ENCODE measurements at regions of chr2 and their contacts with region 1.

Region 1: DNA sequence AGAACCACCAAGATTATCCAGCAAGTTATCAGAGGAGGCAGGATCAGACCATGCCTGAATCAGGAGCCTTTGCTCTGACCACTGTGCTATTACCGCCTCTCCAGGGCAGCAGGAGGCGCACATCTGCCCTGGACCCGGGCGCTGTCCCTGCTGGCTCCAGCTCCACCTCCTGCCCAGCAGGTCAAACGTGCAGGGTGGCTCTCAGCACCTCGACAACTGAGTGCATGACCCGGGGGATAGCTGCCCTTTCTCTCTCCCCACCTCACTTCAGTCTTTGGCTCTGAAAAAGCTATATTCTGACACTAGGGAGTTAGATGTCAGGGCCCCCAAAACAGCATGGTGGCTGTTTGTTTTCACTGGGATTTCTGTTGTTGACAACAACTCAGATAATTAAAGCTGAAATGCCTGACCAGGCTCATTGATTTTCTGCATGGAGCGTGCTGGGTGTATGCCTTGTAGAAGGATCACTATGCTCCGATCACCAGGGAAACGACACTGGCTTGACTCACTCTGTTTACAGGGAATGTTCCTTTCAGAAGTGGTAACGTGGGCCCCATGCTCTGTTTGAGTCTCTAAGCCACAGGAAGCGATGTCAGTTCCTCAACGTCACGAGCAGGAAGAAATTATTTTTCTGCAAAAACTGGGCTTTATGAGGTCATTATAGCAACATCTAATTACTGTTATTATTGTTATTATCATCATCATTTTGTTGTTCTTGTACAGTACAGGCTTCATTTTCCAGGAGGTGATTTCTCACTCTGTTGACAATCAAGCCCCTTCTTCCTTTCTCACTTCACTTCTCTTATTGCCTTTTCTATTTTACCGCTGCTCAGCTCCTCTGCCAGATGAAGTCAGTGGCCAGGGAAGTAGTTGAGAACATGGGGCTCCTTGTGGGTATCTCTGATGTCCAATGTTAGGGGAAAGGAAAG is 125.6 kb downstream of the PLB1 start:
- DNase-seq: peak; percentile 85
- H3K4me3 Mint-ChIP-seq: peak overlapping the region; percentile 53
- H3K27ac Mint-ChIP-seq: peak overlapping the region; percentile 98
- H3K4me1 Mint-ChIP-seq: peaks cover 96% of the 10 kb centered on the region
- H3K27me3 Mint-ChIP-seq: no peaks in the 10 kb centered on the region

Region 2: DNA sequence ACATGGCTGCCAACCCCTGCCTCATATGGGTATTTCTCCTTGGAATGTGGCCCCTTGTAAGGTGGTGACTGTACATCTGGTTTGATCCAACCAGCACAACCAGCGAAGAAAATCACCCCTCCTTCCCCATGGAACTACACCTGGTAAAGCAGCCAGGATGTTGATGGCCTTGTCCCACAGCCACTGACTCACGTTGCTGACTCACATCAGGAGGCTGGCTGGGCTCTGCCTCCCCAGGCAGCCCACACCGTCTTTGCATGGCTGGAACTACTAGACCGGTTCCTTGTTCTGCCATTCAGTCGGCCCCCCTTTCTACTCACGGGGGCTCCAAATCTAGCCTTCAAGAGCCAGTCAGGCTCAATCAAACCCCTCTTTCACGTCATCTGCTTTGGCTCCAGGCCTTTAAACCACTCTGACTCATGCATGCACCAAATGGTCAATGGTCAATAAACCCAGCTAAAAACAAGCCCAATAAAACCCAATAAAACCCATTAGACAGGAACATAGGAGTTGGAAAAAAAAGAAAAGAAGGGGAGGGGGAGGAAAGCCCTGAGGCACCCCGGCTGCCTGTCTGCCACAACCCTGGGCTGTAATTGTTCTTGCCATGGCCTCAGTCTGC is 10.7 kb before region 1 on chr2:
- CTCF ChIA-PET with region 1: interaction called, 4 read pairs
- POLR2A ChIA-PET with region 1: interaction called, 8 read pairs
- intact Hi-C with region 1: loop called (anchors 1 kb)
- DNase-seq: peak; percentile 82
- H3K4me3 Mint-ChIP-seq: peak overlapping the region; percentile 30
- H3K27ac Mint-ChIP-seq: peak overlapping the region; percentile 53
- H3K4me1 Mint-ChIP-seq: peaks cover 25% of the 10 kb centered on the region
- H3K27me3 Mint-ChIP-seq: no peaks in the 10 kb centered on the region

Region 3: DNA sequence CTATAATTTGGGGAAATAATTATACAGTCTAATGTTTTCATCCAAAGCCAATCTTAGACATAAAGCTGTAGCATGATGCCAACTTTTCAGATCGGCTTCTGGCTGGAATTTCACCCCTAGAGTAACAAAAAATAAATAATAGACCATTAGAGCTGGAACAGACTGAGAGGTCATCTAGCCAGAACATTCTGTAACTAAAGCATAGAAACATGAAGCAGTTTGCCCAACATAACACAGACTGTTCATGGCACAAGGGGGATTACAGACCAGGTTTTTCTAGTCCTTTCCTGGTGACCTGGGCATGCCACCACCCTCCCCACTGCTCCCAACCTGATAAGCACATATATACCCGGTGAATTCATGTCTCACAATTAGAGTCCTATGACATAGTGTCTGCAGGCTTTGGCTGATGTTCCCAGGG is 13.8 kb after region 1 on chr2:
- CTCF ChIA-PET with region 1: no interaction called
- POLR2A ChIA-PET with region 1: no interaction called
- intact Hi-C with region 1: no loop called
- DNase-seq: no peak
- H3K4me3 Mint-ChIP-seq: no peak overlapping the region
- H3K27ac Mint-ChIP-seq: no peak overlapping the region
- H3K4me1 Mint-ChIP-seq: peaks cover 6% of the 10 kb centered on the region
- H3K27me3 Mint-ChIP-seq: no peaks in the 10 kb centered on the region

Region 4: DNA sequence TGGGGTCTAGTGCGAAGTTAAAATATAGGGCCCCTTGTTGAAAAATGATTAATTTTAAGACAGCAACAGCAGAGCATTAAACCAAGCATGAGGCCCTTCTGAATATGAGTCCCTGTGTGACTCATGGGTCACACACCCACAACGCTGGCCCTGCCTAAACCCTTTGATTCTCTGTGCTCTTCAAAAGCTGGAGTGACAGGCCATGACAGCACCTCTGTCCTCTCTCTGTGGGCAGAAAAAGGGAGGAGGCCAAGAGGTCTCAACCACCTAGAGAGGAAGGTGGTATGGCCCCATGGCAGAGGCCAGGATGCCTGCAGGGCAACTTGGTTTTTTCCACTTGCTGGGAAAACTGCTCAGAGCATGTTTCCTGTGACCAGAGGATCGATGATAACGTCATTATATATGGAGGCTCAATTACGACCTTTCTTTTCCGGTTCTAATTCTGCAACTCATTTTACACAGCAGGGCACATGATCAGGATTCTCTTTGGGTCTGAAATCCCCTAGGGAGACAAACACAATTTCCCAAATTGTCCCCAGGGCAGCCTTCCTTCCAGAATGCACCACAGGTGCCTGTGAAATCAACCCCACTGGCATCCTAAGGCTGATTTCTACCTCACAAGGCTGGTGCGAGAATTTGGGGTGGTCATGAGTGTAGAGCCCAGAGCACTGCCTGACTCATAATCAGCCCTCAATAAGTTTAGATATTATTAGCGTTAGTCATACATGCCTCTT is 28.2 kb after region 1 on chr2:
- CTCF ChIA-PET with region 1: no interaction called
- POLR2A ChIA-PET with region 1: interaction called, 3 read pairs
- intact Hi-C with region 1: loop called (anchors 2 kb)
- DNase-seq: peak; percentile 83
- H3K4me3 Mint-ChIP-seq: peak overlapping the region; percentile 34
- H3K27ac Mint-ChIP-seq: peak overlapping the region; percentile 77
- H3K4me1 Mint-ChIP-seq: peaks cover 28% of the 10 kb centered on the region
- H3K27me3 Mint-ChIP-seq: no peaks in the 10 kb centered on the region

Region 5: DNA sequence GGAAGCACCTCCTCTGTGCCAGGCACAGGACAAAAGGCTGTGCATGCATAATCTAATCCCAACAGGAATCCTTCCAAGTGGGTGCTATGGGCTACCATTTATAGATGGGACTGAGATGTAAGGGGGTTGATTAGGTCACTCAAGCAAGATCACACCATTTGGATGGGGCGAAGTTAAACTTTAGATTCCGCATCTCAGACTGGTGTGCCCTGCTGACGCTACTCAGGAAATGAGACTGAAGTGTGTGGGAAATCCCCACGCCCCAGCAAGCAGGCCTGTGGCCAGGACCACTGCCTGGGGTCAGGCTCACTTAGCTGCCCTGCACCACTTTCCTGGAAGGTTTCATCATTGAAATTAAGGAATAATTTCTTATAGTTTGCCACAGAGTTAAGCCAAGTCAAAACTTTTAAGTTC is 59.7 kb after region 1 on chr2:
- CTCF ChIA-PET with region 1: no interaction called
- POLR2A ChIA-PET with region 1: interaction called, 6 read pairs
- intact Hi-C with region 1: loop called (anchors 1 kb)
- DNase-seq: peak; percentile 85
- H3K4me3 Mint-ChIP-seq: no peak overlapping the region
- H3K27ac Mint-ChIP-seq: peak overlapping the region; percentile 89
- H3K4me1 Mint-ChIP-seq: peaks cover 43% of the 10 kb centered on the region
- H3K27me3 Mint-ChIP-seq: no peaks in the 10 kb centered on the region

Region 6: DNA sequence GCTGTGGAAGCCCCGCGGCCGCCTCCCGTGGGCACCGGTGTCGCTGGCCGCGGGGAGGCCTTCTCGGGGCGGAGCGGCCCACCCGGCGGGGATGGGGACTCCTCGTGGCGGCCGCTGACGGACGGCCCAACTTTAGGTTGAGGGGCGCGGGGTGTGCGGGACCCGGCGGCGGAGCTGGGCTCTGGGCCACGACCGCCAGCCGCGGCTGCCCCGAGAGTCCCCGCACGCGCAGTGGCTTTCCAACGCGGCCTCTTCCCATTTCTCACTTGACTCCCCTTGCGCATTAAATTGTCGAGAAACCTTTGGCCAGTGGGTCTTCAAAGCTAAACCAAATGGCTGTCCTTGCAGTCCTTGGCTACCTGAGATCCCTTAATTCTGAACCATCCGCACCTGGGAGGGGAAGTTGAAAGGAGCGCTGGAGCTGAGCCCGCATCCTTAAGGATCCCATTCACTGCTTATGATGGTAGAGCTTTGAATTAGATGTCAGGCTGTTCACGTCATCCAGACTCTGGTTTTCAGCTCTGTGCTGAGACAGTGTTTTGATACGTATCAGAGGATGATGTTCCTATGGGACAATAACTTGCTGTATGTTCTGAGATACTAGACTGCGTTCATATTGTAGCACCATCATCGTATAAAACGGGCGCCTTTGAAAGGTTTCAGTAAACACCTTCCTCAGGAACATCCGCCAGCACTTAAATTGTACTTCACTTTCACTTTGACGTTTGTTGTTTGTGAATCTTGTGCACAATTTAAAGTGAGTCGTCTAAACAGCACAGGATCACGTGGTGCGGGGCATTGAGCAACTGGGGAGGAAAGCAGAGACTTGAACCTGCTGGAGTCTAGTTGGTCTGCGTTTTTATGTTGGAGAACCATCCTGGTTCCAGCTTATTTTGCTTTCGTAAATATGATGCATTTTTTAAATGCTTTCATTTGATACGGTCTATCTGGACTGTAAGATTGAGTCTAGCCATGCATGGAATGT is 494.7 kb after region 1 on chr2:
- CTCF ChIA-PET with region 1: no interaction called
- POLR2A ChIA-PET with region 1: no interaction called
- intact Hi-C with region 1: loop called (anchors 5 kb)
- DNase-seq: peak; percentile 85
- H3K4me3 Mint-ChIP-seq: peak overlapping the region; percentile 88
- H3K27ac Mint-ChIP-seq: peak overlapping the region; percentile 93
- H3K4me1 Mint-ChIP-seq: peaks cover 58% of the 10 kb centered on the region
- H3K27me3 Mint-ChIP-seq: no peaks in the 10 kb centered on the region

Measured in activated CD4-positive, alpha-beta memory T cell treated with anti-CD3 and anti-CD28 coated beads for 36 hours (primary cell).